ENCODE measurements at regions of chr11 and their contacts with region 1.

Region 1: GRCh38 chr11:68430801-68431200 is 29.8 kb upstream of the PPP6R3 start:
- DNase-seq: peak; percentile 60
- H3K4me3 Mint-ChIP-seq: no peak overlapping the region
- H3K27ac Mint-ChIP-seq: no peak overlapping the region
- H3K4me1 Mint-ChIP-seq: peaks cover 9% of the 10 kb centered on the region
- H3K27me3 Mint-ChIP-seq: no peaks in the 10 kb centered on the region
- CTCF ChIP-seq: no peak

Region 2: DNA sequence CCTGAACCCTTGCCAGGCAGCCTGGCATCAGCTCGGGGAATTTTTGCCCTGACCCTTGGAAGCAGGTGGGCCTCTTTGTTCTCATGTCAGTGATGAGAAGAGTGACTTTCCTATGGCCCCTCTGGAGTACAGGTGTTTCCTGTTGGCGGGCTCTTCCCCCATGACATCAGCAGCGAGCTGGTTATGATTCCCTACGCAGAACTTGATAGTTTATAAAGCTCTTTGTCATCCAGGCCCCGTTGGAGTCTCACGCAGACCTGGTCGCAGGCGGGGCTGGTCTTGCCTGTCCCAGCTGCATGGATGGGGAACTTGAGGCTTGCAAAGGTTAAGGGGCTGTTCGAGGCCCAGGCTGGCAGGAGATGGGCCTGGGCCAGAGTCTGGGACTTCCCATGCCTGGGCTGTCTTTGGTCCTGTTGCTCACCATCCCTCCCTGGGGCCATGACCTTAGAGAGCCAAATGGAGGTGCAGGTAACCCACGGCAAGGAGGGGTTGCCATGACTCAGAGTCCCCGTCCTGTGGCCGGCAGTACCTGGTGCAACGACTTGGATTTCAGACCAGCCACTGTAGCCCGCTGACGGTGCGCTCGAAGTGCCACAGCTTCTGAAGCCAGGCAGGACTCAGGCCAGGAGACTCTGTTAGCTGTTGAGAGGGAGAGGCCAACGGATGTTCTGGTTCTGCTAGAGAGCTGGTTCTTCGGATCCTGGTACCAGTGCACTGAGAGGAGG is 16.1 kb before region 1 on chr11:
- CTCF ChIA-PET with region 1: interaction called, 12 read pairs
- intact Hi-C with region 1: no loop called
- DNase-seq: no peak
- H3K4me3 Mint-ChIP-seq: no peak overlapping the region
- H3K27ac Mint-ChIP-seq: no peak overlapping the region
- H3K4me1 Mint-ChIP-seq: no peaks in the 10 kb centered on the region
- H3K27me3 Mint-ChIP-seq: no peaks in the 10 kb centered on the region
- CTCF ChIP-seq: no peak